ENCODE measurements at regions of chr14 and their contacts with region 1.

Region 1: GRCh38 chr14:60561845-60562746 is 53.1 kb downstream of the SIX6 start:
- DNase-seq: peak; percentile 53
- H3K4me3 Mint-ChIP-seq: no peak overlapping the region
- H3K27ac Mint-ChIP-seq: no peak overlapping the region
- H3K4me1 Mint-ChIP-seq: no peaks in the 10 kb centered on the region
- H3K27me3 Mint-ChIP-seq: peaks cover 3% of the 10 kb centered on the region

Region 2: GRCh38 chr14:60195179-60195810 is 366.8 kb before region 1 on chr14:
- CTCF ChIA-PET with region 1: no interaction called
- POLR2A ChIA-PET with region 1: no interaction called
- intact Hi-C with region 1: loop called (anchors 5 kb)
- DNase-seq: no peak
- H3K4me3 Mint-ChIP-seq: no peak overlapping the region
- H3K27ac Mint-ChIP-seq: no peak overlapping the region
- H3K4me1 Mint-ChIP-seq: peaks cover 8% of the 10 kb centered on the region
- H3K27me3 Mint-ChIP-seq: peaks cover 9% of the 10 kb centered on the region

Region 3: DNA sequence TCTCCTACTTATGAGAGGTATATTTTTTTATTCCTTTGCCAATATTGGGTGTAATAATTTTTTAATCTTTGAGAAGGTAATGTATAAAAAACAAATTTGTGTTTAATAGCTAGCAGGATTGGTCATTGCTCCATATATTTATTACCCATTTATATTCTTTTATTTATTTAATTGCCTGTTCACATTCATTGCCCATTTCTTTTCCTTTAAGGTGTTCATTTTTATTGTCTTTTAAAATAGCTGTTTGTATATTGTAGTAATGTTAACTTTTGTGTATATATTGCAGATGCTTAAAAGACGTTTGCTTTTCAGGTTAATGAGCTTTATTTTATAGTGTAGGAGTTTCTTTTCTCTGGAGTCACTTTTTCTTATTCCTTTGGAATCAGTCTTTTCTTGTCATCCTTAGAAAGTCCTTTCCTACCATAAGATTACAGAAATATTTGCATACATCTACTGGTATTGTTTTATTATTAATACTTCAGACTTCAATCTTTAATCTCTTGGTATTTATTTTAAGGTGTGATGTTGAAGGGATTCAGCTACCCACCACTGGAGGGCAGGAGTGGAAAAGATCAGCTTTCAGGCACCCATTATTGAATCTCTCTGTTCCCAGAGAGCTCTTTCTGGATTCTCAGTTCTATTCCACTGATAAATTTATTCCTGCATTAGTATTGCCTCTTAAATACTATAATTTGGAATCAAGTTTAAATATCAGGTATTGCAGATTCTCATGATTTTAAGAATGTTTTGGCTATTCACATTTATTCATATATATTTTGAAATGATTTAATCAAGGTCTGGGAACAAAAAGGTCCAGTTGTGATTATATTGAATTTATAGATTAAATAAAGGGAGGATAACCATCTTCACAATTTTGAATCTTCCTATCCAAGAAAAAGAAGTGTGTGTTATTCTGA is 295.8 kb before region 1 on chr14:
- CTCF ChIA-PET with region 1: no interaction called
- POLR2A ChIA-PET with region 1: no interaction called
- intact Hi-C with region 1: loop called (anchors 5 kb)
- DNase-seq: peak; percentile 19
- H3K4me3 Mint-ChIP-seq: no peak overlapping the region
- H3K27ac Mint-ChIP-seq: no peak overlapping the region
- H3K4me1 Mint-ChIP-seq: peaks cover 18% of the 10 kb centered on the region
- H3K27me3 Mint-ChIP-seq: no peaks in the 10 kb centered on the region

Region 4: GRCh38 chr14:60349663-60350365 is 212.3 kb before region 1 on chr14:
- CTCF ChIA-PET with region 1: interaction called, 38 read pairs
- POLR2A ChIA-PET with region 1: no interaction called
- intact Hi-C with region 1: no loop called
- DNase-seq: peak; percentile 24
- H3K4me3 Mint-ChIP-seq: no peak overlapping the region
- H3K27ac Mint-ChIP-seq: no peak overlapping the region
- H3K4me1 Mint-ChIP-seq: no peaks in the 10 kb centered on the region
- H3K27me3 Mint-ChIP-seq: no peaks in the 10 kb centered on the region

Region 5: DNA sequence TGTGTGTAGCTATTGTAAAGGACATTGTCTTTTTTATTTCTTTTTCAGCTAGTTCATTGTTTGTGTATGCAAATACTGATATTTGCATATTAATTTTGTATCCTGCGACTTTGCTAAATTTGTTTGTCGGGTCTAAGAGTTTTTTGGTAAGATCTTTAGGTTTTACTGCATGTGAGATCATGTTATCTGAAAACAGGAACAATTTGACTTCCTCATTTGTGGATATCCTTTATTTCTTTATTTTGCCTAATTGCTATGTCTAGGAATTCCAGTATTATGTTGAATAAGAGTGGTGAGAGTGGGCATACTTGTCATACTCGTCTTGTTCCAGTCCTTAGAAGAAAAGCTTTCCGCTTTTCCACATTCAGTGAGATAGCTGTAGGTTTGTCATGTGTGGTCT is 133.2 kb after region 1 on chr14:
- CTCF ChIA-PET with region 1: no interaction called
- POLR2A ChIA-PET with region 1: no interaction called
- intact Hi-C with region 1: no loop called
- DNase-seq: no peak
- H3K4me3 Mint-ChIP-seq: no peak overlapping the region
- H3K27ac Mint-ChIP-seq: no peak overlapping the region
- H3K4me1 Mint-ChIP-seq: no peaks in the 10 kb centered on the region
- H3K27me3 Mint-ChIP-seq: peaks cover 11% of the 10 kb centered on the region